ENCODE measurements at regions of chr5 and their contacts with region 1.

Region 1: DNA sequence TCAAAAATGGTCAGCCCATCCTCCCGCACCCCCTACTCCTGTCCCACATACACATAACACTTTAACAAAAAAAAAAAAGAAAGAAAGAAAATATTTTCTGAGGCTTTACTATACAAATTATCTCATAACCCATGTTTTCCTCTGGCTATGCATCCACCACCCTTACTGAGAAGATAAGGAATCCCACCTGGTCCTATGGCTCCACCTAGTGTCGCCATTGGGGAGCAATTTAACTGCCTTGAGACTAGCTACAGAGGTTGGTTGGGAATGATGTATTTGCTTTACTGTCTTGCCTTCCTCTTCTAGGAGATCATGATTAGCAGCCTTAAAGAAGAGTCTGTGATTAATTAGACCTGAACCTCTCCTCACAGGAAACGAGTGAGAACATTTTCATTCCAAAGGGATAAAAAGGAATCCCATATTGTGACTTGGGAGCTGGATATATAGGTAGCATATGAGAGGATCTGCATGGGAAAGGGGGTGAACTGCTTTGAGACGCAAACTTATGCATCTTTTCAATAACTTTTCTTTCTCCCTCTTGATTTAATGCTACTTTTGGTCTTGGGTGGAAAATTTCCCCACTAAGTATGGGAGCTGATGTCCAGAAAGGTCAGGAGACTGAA is 77.7 kb upstream of the SELENOP start:
- DNase-seq: peak; percentile 18
- H3K4me3 ChIP-seq: no peak overlapping the region
- H3K27ac ChIP-seq: no peak overlapping the region
- H3K27me3 ChIP-seq: peaks cover 8% of the 10 kb centered on the region
- CTCF ChIP-seq: peak; percentile 95

Region 2: GRCh38 chr5:42005561-42006153 is 883.8 kb before region 1 on chr5:
- CTCF ChIA-PET with region 1: interaction called, 10 read pairs
- POLR2A ChIA-PET with region 1: no interaction called
- DNase-seq: no peak
- H3K4me3 ChIP-seq: no peak overlapping the region
- H3K27ac ChIP-seq: no peak overlapping the region
- H3K27me3 ChIP-seq: no peaks in the 10 kb centered on the region
- CTCF ChIP-seq: peak; percentile 78

Region 3: DNA sequence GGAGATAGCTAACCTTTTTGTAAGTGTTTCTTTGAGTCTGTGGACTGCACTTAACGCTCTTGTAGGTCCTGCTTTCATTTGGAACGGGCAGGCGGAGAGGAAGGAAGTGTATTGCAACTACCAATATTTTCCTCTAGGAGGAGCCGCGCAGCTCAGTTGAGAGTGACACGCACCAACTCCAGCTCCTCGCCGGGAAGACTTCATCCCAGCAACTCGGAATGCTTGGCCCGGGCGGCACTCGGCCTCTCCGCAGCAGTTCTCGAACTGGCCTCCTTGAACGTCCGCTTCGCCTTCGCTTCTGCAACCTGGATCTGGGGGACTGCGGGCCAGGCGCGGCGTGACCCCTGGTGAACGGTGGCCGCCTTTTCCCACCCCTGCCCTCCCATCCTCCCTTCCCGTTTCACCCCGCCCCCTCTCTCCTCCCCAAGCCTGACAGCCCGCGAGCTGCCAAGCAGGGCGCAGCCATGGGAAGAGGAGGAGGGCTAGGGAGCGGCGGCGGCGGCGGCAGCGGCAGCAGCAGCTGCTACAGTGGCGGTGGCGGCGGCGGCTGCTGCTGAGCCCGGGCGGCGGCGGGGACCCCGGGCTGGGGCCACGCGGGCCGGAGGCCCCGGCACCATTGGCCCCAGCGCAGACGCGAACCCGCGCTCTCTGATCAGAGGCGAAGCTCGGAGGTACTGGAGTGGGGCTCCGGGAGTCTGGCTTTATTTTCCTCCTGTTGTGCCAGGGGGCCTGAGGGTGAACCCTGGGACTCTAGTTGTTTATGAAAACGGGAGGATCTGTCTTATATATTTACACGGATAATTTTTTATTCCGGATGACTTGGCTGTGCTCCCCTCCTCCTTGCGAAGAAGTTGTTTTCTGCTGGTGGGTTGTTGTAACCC is 465.9 kb before region 1 on chr5 and contains the start of gene GHR:
- CTCF ChIA-PET with region 1: interaction called, 10 read pairs
- POLR2A ChIA-PET with region 1: no interaction called
- DNase-seq: peak; percentile 72
- H3K4me3 ChIP-seq: peak within 1 kb of the TSS; percentile 69
- H3K27ac ChIP-seq: no peak within 1 kb of the TSS
- H3K27me3 ChIP-seq: peaks cover 11% of the 10 kb centered on the region
- CTCF ChIP-seq: peak; percentile 78
- polyA plus RNA-seq, gene GHR: 0.48 and 0.63 TPM in 2 replicates

Region 4: GRCh38 chr5:42745426-42745825 is 144.0 kb before region 1 on chr5:
- CTCF ChIA-PET with region 1: interaction called, 11 read pairs
- POLR2A ChIA-PET with region 1: no interaction called
- DNase-seq: no peak
- H3K4me3 ChIP-seq: no peak overlapping the region
- H3K27ac ChIP-seq: no peak overlapping the region
- H3K27me3 ChIP-seq: no peaks in the 10 kb centered on the region
- CTCF ChIP-seq: peak; percentile 40

Region 5: GRCh38 chr5:42791151-42791550 is 98.3 kb before region 1 on chr5:
- CTCF ChIA-PET with region 1: no interaction called
- POLR2A ChIA-PET with region 1: no interaction called
- DNase-seq: no peak
- H3K4me3 ChIP-seq: no peak overlapping the region
- H3K27ac ChIP-seq: no peak overlapping the region
- H3K27me3 ChIP-seq: no peaks in the 10 kb centered on the region
- CTCF ChIP-seq: no peak